ENCODE measurements at regions of chr10 and their contacts with region 1.

Region 1: DNA sequence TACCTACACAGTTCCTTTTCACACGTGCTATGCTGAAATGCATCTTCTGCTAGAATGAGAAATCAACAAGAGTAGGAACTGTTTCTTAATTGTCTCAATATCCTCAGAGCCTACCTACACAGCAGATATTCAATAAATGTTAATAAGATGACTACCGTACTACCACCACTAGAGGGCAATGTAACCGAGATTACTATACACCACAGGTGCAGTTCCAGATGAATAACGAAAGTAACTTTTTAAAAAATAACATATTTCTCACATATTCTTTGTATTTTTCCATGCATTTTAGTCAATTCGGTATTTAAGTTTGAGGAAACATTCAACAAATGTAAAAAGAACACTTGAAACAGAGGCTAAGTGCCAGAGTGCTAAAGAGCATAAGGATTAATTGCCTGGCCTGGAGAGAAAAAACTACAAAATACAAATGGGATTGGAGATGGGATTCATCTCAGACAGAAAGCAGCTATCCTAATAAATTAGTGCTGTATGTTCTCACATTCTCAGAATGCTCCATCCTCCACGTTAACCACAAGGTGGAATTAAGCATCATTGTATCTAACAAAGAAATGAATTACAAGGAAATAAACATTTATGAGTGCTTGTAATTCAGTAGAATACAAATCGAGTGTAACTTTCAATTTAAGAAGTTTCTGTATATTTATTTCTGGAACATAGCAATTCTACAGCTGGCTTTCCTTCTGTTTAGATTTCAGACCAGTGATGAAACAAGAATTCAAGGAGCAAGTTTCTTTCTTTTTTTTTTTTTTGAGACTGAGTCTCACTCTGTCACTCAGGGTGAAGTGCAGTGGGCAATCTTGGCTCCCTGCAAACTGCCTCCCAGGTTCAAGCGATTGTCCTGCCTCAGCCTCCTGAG is 20.3 kb upstream of the HECTD2 start:
- DNase-seq: no peak
- H3K4me3 Mint-ChIP-seq: no peak overlapping the region
- H3K27ac Mint-ChIP-seq: no peak overlapping the region
- H3K4me1 Mint-ChIP-seq: peaks cover 4% of the 10 kb centered on the region
- H3K27me3 Mint-ChIP-seq: peaks cover 17% of the 10 kb centered on the region

Region 2: DNA sequence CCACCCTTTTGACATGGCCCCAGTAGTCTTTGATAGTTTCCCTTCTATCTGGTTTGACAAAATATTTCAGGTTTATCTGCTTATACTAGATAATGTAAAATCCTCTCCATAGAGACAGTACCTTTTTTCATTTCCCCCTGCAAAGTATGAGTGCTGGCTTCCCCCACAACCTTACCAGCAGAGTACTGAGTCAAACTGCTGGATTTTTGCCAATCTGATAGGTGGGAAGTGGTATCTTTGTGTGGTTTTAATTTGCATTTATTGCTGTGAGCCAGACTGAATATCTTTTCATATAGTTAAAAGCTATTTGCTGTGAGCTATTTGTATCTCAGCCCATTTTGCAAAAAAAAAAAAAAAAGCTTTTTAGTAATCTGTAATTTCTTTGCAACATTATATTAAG is 11.8 kb before region 1 on chr10:
- CTCF ChIA-PET with region 1: interaction called, 10 read pairs
- POLR2A ChIA-PET with region 1: no interaction called
- intact Hi-C with region 1: no loop called
- DNase-seq: peak; percentile 19
- H3K4me3 Mint-ChIP-seq: no peak overlapping the region
- H3K27ac Mint-ChIP-seq: peak overlapping the region; percentile 0
- H3K4me1 Mint-ChIP-seq: peaks cover 14% of the 10 kb centered on the region
- H3K27me3 Mint-ChIP-seq: peaks cover 26% of the 10 kb centered on the region

Region 3: DNA sequence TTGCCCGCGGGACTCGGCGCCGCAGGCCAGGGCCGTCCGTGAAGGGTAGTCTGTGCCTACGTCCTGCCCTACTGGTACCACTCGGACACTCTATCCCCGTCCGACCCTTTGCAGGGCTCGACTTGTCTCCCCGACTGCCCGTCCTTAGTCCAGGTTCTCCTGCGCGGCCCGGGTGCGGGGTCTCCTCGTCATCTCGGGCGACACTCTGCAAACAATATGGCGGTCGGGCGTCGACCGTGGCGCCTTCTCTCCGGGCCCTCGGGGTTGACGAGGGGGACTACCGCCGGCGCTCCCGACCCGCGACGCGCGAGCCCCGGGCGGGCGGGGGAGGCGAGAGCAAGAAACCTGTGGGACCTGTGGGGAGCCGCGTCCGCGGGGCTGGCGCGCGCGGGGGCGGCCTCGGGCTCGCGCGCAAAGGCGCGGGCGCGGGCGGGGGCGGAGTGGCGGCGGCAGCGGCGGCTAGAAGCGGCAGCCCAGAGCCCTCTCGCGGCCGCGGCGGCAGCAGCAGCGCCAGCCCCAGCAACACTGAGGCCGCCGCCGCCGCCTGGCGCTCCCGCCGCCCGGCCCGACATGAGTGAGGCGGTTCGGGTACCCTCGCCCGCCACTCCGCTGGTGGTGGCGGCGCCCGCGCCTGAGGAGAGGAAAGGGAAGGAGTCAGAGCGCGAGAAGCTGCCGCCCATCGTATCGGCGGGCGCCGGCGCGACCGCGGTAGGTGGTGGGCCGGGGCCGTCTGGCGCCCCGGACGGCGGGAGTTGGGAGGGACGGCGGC is 20.2 kb after region 1 on chr10 and contains the start of gene HECTD2:
- CTCF ChIA-PET with region 1: interaction called, 8 read pairs
- POLR2A ChIA-PET with region 1: no interaction called
- intact Hi-C with region 1: loop called (anchors 1 kb)
- DNase-seq: peak; percentile 82
- H3K4me3 Mint-ChIP-seq: peak within 1 kb of the TSS; percentile 79
- H3K27ac Mint-ChIP-seq: peak within 1 kb of the TSS; percentile 83
- H3K4me1 Mint-ChIP-seq: peaks cover 13% of the 10 kb centered on the region
- H3K27me3 Mint-ChIP-seq: no peaks in the 10 kb centered on the region
- total RNA-seq, gene HECTD2: 4.0 to 5.5 TPM

Region 4: DNA sequence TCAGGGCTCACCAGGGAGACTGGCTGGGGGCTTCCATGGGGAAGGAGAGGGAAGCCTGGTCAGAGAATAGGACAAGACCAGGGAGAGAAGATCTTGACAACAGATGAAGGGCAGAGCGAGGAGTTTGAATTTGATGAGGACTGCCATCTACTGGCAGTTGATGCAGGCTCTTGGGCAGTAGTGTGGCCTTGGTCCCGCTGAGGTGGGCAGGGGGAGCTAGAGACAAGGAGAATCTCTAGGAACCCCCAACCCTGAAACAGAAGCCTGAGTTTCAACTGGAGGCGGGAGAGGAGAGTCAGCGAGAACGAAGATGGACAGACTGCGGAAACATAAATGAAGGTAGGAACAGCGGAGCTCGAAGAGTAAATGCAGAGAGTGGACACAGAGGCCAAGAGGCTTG is 162.0 kb after region 1 on chr10:
- CTCF ChIA-PET with region 1: interaction called, 13 read pairs
- POLR2A ChIA-PET with region 1: no interaction called
- intact Hi-C with region 1: loop called (anchors 5 kb)
- DNase-seq: peak; percentile 15
- H3K4me3 Mint-ChIP-seq: no peak overlapping the region
- H3K27ac Mint-ChIP-seq: no peak overlapping the region
- H3K4me1 Mint-ChIP-seq: no peaks in the 10 kb centered on the region
- H3K27me3 Mint-ChIP-seq: no peaks in the 10 kb centered on the region

Region 5: GRCh38 chr10:91694170-91694794 is 304.4 kb after region 1 on chr10:
- CTCF ChIA-PET with region 1: interaction called, 7 read pairs
- POLR2A ChIA-PET with region 1: no interaction called
- intact Hi-C with region 1: loop called (anchors 2 kb)
- DNase-seq: no peak
- H3K4me3 Mint-ChIP-seq: no peak overlapping the region
- H3K27ac Mint-ChIP-seq: no peak overlapping the region
- H3K4me1 Mint-ChIP-seq: no peaks in the 10 kb centered on the region
- H3K27me3 Mint-ChIP-seq: peaks cover 7% of the 10 kb centered on the region

Measured in activated CD4-positive, alpha-beta memory T cell treated with anti-CD3 and anti-CD28 coated beads for 36 hours (primary cell).